ENCODE measurements at regions of chr17 and their contacts with region 1.

Region 1: GRCh38 chr17:78112518-78113226 is 15.9 kb downstream of the TMC6 start:
- DNase-seq: peak; percentile 74 to 89 (median 82)
- H3K4me3 ChIP-seq: peak overlapping the region in 6 of 59 donors; percentile 2 to 24 (median 13)
- H3K27ac ChIP-seq: peak overlapping the region; percentile 77 to 100 (median 99)
- H3K27me3 ChIP-seq: no peaks in the 10 kb centered on the region
- CTCF ChIP-seq: peak; percentile 96 to 100 (median 100)

Region 2: GRCh38 chr17:78128551-78129350 is 16.1 kb after region 1 on chr17 and contains the start of gene TMC6:
- intact Hi-C with region 1: loop called in 1 of 2 experiments (anchors 2 kb)
- DNase-seq: no peak
- H3K4me3 ChIP-seq: peak within 1 kb of the TSS; percentile 39 to 94 (median 79)
- H3K27ac ChIP-seq: peak within 1 kb of the TSS; percentile 76 to 100 (median 99)
- H3K27me3 ChIP-seq: peaks cover 0 to 17% (median 0%) of the 10 kb centered on the region in 45 donors
- CTCF ChIP-seq: peak in 3 of 56 donors; percentile 11 to 37 (median 28)
- total RNA-seq, gene TMC6: 17.3 to 352 (median 81.1) TPM

Region 3: GRCh38 chr17:78168242-78168902 is 55.7 kb after region 1 on chr17 and contains the start of gene SYNGR2:
- intact Hi-C with region 1: loop called in 1 of 2 experiments (anchors 2 kb)
- DNase-seq: peak; percentile 59 to 89 (median 75)
- H3K4me3 ChIP-seq: peak within 1 kb of the TSS; percentile 47 to 96 (median 73)
- H3K27ac ChIP-seq: peak within 1 kb of the TSS; percentile 61 to 95 (median 89)
- H3K27me3 ChIP-seq: no peaks in the 10 kb centered on the region
- CTCF ChIP-seq: peak in 24 of 56 donors; percentile 9 to 45 (median 19)
- total RNA-seq, gene SYNGR2: 19.6 to 122 (median 45.6) TPM

Region 4: DNA sequence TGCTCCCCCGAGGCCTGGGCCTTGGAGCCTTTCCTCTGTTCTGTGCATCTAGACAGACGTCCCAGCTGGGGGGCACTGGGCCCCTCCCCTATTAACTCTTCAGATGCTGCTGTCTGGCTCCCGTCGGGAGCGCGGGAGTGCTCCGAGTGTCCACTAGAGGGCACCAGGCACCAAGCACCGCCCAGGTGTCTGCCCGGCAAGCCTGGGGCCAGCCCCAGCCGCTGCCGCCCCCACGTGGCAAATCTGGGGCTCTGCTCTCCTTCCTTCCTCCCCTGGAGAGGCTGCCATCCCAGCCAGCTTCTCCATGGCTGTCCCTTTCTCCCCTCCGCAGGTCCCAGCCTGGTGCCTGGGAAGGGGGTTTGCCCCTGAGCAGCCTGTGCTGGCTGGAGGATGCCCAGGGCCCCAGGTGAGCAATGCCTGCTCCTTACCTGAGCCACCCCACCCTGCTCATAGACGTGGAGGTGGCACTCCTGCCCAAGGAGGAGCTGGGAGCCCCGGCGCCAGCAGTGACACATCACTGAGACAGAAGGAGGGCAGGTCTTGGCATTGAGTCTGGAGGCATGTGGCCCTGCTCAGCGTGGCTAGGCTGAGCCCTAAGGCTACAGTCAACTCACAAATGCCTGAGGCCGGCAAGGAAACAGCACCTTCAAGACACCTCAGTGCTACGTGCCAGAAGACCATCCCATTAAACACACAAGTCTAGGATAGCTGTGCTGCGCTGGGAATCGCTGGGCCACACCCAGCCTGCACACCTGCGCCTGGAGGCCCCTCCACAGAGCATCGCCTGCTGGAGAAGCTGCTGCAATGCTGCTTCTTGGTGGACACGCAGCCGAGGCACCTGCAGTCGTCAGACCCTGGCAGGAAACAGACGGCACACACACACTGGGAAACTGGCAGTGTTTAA is 138.5 kb after region 1 on chr17:
- intact Hi-C with region 1: loop called (anchors 1 to 2 kb)
- DNase-seq: peak; percentile 75 to 90 (median 86)
- H3K4me3 ChIP-seq: peak overlapping the region in 40 of 59 donors; percentile 6 to 58 (median 29)
- H3K27ac ChIP-seq: peak overlapping the region in 58 of 59 donors; percentile 28 to 100 (median 83)
- H3K27me3 ChIP-seq: no peaks in the 10 kb centered on the region
- CTCF ChIP-seq: peak; percentile 98 to 100 (median 100)

Measured in dorsolateral prefrontal cortex (tissue), 120 donors.